SK-N-SH (cell line): ENCODE measurements at regions of chr5 and their contacts with region 1.

Region 1: DNA sequence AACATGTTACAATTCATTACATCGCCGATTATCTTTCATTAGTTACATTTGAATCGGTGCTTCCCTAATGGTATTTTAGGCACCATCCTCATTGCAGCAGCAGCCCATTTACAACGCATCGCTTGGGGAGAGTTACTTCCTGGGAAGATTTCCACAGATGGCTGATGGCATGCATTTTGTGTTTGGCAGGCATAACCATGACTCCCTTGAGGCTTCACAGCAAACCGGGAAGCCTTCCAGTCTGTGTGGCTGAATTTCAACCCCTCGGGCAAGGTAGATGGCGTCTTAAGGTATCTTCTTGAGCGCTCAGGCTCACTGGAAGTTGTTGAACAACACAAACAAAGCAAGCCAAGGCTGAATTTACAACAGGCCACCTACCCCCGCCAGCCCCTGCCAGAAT is 1.6 kb upstream of the DNAH5 start:
- DNase-seq: no peak
- H3K4me3 ChIP-seq: no peak overlapping the region
- H3K27ac ChIP-seq: no peak overlapping the region
- H3K4me1 ChIP-seq: no peaks in the 10 kb centered on the region
- H3K27me3 ChIP-seq: no peaks in the 10 kb centered on the region; the same call in 1 of the 2 replicates
- CTCF ChIP-seq: no peak
- EP300 ChIP-seq: no peak
- RAD21 ChIP-seq: no peak

Region 2: DNA sequence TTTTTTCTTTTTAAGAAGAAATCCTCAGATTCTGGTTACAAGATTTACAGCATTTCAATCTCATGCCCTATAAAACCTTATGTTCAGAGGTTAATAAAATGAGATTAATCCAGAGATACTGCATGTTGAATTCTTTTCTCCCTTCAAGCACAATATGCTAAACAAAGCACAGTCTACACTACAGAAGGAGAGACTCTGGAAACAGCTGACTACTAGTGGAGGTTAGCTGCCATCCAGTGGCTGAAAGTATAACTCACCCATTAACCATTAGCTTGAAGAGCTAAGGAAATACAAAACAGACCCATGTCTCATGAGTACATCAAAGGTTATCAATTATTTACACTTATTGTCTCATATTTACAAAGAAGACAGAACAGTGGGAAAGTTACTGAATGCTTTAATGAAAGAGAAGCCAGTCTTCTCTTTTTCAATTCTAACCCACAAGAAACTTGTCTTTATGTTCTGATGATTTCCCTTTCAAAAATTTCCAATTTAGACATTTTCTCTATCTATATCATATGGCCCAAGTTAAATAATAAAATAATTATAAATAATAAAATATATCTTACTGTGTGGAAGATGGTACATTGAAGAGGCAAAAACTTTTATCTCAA is 11.0 kb after region 1 on chr5:
- CTCF ChIA-PET with region 1: interaction called, 10 read pairs
- POLR2A ChIA-PET with region 1: no interaction called
- DNase-seq: peak; percentile 49
- H3K4me3 ChIP-seq: no peak overlapping the region; a peak in 1 of 4 replicates
- H3K27ac ChIP-seq: no peak overlapping the region
- H3K4me1 ChIP-seq: 0 out of 4 replicates have a peak, but pooled peaks cover 0 to 7% of the 10 kb centered on the region in 2 experiments
- H3K27me3 ChIP-seq: peaks cover 11% of the 10 kb centered on the region; the same call in 1 of the 2 replicates
- CTCF ChIP-seq: peak; percentile 85
- EP300 ChIP-seq: no peak
- RAD21 ChIP-seq: peak; percentile 84